ENCODE measurements at regions of chr19 and their contacts with region 1.

Region 1: DNA sequence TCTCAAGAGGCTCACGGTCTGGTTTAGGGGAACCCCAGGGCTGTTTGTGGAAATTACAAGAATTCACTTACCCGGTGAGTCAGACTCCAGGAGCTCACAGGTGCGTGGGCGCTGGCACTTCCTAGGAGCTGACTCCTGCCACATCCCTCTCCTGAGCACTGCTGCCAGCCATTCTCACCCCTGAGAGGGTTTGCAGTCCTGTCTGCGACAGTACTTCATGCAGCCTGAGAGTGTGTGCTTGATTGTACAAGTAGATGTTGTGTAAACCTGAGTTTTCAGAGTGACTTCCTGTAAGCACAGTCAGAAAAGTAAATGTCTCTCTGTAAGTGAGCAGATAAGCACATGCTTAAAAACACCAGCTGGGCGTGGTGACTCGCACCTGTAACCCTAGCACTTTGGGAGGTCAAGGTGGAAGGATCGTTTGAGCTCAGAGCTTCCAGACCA is 8.1 kb downstream of the MRPL4 start:
- DNase-seq: no peak
- H3K4me3 Mint-ChIP-seq: peak overlapping the region; percentile 52
- H3K27ac Mint-ChIP-seq: peak overlapping the region; percentile 92
- H3K4me1 Mint-ChIP-seq: peaks cover 16% of the 10 kb centered on the region
- H3K27me3 Mint-ChIP-seq: no peaks in the 10 kb centered on the region

Region 2: GRCh38 chr19:10388957-10389356 is 128.8 kb after region 1 on chr19:
- intact Hi-C with region 1: loop called (anchors 1 kb)
- DNase-seq: peak; percentile 69
- H3K4me3 Mint-ChIP-seq: no peak overlapping the region
- H3K27ac Mint-ChIP-seq: no peak overlapping the region
- H3K4me1 Mint-ChIP-seq: peaks cover 5% of the 10 kb centered on the region
- H3K27me3 Mint-ChIP-seq: no peaks in the 10 kb centered on the region